ENCODE measurements at regions of chr12 and their contacts with region 1.

Region 1: GRCh38 chr12:119544765-119545625 is 48.6 kb upstream of the TMEM233 start:
- DNase-seq: peak; percentile 47 to 73
- H3K4me3 ChIP-seq: no peak overlapping the region
- H3K4me3 Mint-ChIP-seq: no peak overlapping the region
- H3K27ac Mint-ChIP-seq: no peak overlapping the region
- H3K4me1 ChIP-seq: no peaks in the 10 kb centered on the region
- H3K4me1 Mint-ChIP-seq: no peaks in the 10 kb centered on the region
- H3K27me3 ChIP-seq: no peaks in the 10 kb centered on the region
- H3K27me3 Mint-ChIP-seq: peaks cover 21% of the 10 kb centered on the region
- CTCF ChIP-seq: peak; percentile 74 to 91

Region 2: DNA sequence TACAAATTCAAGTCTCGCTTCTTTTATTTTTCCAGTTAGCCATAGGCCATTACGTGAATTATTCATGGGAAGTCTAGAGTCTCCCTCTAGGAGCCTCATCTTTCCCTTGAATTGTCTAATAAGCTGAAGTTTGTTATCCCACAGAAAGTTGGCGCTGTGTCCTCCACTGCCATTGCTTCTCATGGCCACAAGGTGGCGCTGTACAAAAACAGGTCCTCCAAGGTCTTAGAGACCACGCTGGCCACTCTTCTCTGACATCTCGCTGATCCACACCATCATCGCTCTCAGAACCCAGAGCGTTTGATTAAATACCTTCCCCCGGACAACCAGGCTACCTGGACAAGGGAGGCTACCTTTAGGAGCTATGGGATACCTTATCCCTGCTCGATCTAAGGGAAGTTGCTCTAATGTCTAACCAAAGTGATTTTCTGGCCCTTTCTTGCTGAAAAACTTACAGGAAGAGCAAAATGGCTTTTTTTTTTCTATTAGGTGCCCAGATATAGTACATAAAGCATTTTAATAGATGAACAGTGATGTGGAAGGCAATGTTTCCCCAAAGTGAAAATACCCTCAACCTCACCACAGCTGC is 100.4 kb before region 1 on chr12:
- CTCF ChIA-PET with region 1: interaction called, 14 read pairs
- POLR2A ChIA-PET with region 1: no interaction called
- intact Hi-C with region 1: loop called (anchors 1 kb)
- DNase-seq: peak; percentile 47 to 57
- H3K4me3 ChIP-seq: no peak overlapping the region
- H3K4me3 Mint-ChIP-seq: no peak overlapping the region
- H3K27ac Mint-ChIP-seq: no peak overlapping the region
- H3K4me1 ChIP-seq: no peaks in the 10 kb centered on the region
- H3K4me1 Mint-ChIP-seq: no peaks in the 10 kb centered on the region
- H3K27me3 ChIP-seq: no peaks in the 10 kb centered on the region
- H3K27me3 Mint-ChIP-seq: no peaks in the 10 kb centered on the region
- CTCF ChIP-seq: peak; percentile 87 to 97